HEK293 (cell line): ENCODE measurements at regions of chr20 and their contacts with region 1.

Region 1: DNA sequence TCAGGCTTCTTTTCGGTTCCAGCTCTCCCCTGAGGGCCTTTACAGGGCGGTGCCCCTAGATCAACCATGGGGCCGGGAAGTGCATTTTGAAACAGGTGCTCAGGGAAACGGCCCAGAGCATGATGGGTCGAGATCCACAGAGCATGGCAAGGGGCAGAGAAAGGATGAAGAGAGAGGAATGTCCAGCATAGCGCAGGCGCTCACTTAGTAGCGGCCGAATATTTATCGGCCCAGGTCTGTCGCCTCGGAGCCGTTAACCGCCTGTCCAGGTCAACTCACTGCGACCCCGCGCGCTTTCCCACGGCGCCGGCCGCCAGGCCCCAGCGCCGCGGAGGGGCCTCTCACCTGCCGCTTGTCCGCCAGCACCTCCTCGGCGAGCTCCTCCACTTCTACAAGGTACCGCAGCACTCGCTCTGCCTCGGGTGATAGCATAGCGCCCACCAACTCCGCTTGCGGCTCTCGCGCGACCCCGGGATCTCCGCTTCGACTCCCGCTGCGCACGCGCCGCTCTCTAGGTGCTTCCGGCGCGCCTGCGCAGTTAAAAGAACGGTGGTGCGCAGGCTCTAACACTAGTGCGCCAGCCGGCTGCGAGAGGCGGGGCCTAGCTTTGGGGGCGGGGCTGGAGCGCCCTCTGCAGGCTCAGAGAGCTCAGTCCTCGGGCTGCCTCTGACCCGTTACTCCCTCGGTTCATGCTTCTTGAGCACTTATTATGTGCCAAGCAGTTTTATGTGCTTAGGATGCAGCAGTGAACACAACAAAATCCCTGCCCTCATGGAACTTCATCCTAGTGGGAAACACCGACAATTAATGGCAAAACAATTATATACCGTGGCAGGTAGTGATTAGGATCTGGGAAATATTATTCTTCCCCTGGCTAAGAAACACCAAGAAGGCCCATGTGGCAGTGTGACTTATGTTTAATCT is at the start of gene PDRG1:
- H3K4me3 ChIP-seq: peak within 1 kb of the TSS; percentile 87
- H3K27ac ChIP-seq: peak within 1 kb of the TSS; percentile 60
- H3K4me1 ChIP-seq: no peaks in the 10 kb centered on the region
- CTCF ChIP-seq: peak; percentile 94

Region 2: DNA sequence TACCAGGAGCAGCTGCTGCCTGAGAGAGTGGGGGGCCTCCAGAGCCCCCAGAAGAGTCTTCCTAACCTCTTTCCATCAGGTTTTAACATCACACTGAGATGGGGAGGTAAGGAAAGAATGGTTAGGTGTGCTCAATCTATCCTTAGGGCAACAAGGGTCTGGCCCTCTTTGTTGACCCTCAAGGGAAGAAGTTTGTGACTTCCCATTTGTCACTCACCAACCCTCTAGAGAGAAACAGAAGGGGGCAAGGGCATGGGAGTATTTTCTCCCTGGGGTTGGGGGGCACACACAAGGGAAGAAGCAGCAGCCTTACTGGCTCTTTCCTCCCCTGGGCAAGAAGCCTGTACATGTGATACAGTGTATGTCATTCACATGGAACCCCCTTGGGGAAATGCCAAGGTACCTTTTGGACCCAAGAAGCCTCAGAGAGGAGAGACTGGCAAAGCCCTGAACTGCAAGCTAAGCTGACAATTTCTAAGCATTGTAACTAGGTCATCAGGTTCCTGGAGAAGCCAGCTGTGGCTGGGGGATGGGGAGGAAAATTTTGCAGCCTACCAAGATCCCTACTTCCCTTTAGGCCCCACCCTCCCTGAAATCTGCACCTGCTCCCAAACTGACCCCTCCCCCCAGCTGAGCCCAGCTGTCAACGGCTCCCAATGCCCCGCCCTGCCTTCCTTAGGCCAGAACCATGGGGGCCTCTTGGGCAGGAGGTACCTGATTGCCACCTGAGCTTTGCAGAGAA is 243.6 kb before region 1 on chr20:
- CTCF ChIA-PET with region 1: no interaction called
- POLR2A ChIA-PET with region 1: no interaction called
- H3K4me3 ChIP-seq: no peak overlapping the region
- H3K27ac ChIP-seq: no peak overlapping the region
- H3K4me1 ChIP-seq: peaks cover 11% of the 10 kb centered on the region; the same call in 1 of the 2 replicates
- CTCF ChIP-seq: no peak

Region 3: GRCh38 chr20:31835977-31836852 is 115.6 kb before region 1 on chr20:
- CTCF ChIA-PET with region 1: interaction called, 11 read pairs
- POLR2A ChIA-PET with region 1: no interaction called
- H3K4me3 ChIP-seq: no peak overlapping the region
- H3K27ac ChIP-seq: no peak overlapping the region
- H3K4me1 ChIP-seq: no peaks in the 10 kb centered on the region
- CTCF ChIP-seq: no peak

Region 4: DNA sequence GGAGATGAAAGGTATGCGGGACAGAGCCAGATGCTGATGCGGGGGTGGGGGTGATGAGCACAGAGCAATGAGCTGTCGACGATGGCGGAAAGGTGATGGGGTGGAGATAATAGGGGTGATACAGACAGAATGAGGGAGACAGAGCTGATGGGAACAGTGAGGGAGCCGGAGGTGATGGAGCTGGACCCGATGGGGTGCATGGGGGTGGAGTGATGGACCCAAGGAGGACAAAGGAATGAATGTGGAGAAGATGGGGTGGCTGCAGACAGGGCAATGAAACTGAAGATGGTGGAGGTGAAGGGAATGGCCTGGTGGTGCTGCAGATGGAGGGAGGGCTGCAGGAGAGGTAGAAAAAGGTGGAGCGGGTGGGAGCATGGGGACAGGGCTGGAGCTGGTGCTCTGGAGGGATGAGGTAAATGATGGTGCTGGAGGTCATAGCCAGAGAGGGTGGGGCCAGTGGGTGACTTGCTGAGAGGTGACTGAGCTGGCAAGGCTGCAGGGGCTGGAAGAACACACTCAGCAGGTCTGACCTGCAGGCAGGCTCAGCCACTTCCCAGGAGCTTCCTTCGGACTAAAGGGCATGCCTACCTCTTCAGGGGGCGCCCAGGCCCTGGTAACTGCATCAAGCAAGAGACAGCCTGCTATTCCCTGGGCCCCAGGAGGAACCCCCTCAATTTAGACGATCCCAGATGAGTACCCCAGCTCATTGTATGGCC is 100.4 kb before region 1 on chr20:
- CTCF ChIA-PET with region 1: interaction called, 83 read pairs
- POLR2A ChIA-PET with region 1: interaction called, 9 read pairs
- H3K4me3 ChIP-seq: no peak overlapping the region
- H3K27ac ChIP-seq: no peak overlapping the region
- H3K4me1 ChIP-seq: no peaks in the 10 kb centered on the region
- CTCF ChIP-seq: no peak

Region 5: DNA sequence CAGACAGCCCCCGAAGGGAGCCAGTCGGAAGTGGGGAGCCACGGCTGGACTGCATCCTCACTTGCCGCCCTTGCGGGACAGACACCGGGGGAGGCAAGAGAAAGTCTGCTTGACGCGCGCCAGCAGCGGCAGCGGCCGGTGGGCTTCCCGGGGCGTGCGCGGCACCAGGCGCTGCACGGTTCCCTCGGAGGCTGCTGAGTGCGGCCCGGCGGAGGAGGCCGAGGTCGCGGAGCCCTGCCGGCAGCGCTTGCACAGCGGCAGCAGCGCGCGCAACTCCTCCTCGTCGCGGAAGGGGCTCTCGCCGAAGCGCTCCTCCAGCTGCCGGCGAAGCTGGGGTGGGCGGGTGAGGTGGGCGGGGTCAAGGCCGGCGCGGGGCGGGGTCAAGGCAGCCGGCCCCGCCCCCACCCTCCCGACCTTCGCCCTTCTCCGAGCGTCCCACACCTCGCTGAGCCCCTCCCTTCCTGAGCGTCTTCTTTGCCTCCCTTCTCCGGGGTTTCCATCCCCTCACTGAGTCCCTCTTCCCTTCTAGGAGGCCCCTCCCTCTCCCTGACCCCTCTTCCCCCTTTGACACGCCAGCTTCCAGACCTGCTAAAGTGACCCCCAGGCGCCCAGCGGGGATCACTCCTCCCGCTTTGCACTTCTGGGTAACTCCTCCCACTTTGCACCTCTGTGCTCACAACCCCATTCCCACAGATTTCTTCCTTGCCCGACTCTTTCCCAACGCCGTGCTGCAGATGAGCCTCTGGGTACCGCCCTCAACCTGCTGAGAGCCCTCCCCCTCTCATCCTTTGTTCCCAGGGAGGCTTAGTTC is 90.2 kb before region 1 on chr20:
- CTCF ChIA-PET with region 1: interaction called, 83 read pairs
- POLR2A ChIA-PET with region 1: interaction called, 3 read pairs
- H3K4me3 ChIP-seq: peak overlapping the region; percentile 38
- H3K27ac ChIP-seq: no peak overlapping the region
- H3K4me1 ChIP-seq: 0 out of 2 replicates have a peak, but pooled peaks cover 2% of the 10 kb centered on the region
- CTCF ChIP-seq: no peak

Region 6: GRCh38 chr20:32031007-32031958 is 79.5 kb after region 1 on chr20:
- CTCF ChIA-PET with region 1: interaction called, 19 read pairs
- POLR2A ChIA-PET with region 1: no interaction called
- H3K4me3 ChIP-seq: no peak overlapping the region; the same call in 1 of the 2 replicates
- H3K27ac ChIP-seq: no peak overlapping the region
- H3K4me1 ChIP-seq: no peaks in the 10 kb centered on the region
- CTCF ChIP-seq: peak; percentile 88; the same call in 1 of the 2 replicates

Region 7: DNA sequence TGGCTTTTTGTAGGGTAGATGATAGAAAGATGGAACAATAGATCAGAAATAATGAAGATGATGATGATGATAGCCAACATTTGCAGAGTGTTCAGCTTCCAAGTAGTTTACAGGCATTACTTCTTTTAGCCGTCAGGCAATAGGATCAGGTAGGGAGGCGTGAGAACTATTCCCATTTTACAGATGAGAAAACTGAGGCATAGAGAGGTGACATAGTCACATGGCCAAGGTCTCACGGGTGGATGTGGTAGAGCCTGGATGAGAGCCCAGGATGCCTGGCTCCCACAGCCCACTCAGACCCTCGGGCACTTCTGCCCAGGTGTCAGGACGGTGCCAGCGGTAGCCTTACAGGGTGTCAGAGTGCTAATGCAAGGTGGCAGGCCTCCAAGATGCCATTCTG is 131.7 kb after region 1 on chr20:
- CTCF ChIA-PET with region 1: no interaction called
- POLR2A ChIA-PET with region 1: no interaction called
- H3K4me3 ChIP-seq: no peak overlapping the region
- H3K27ac ChIP-seq: no peak overlapping the region
- H3K4me1 ChIP-seq: no peaks in the 10 kb centered on the region
- CTCF ChIP-seq: no peak